Activated naive CD4-positive, alpha-beta T cell treated with anti-CD3 and anti-CD28 coated beads for 36 hours (primary cell): ENCODE measurements at regions of chr22 and their contacts with region 1.

Region 1: GRCh38 chr22:39490135-39490798 is 11.8 kb upstream of the MIEF1 start:
- DNase-seq: peak; percentile 85
- H3K4me3 Mint-ChIP-seq: no peak overlapping the region
- H3K27ac Mint-ChIP-seq: no peak overlapping the region
- H3K4me1 Mint-ChIP-seq: peaks cover 5% of the 10 kb centered on the region
- H3K27me3 Mint-ChIP-seq: no peaks in the 10 kb centered on the region

Region 2: DNA sequence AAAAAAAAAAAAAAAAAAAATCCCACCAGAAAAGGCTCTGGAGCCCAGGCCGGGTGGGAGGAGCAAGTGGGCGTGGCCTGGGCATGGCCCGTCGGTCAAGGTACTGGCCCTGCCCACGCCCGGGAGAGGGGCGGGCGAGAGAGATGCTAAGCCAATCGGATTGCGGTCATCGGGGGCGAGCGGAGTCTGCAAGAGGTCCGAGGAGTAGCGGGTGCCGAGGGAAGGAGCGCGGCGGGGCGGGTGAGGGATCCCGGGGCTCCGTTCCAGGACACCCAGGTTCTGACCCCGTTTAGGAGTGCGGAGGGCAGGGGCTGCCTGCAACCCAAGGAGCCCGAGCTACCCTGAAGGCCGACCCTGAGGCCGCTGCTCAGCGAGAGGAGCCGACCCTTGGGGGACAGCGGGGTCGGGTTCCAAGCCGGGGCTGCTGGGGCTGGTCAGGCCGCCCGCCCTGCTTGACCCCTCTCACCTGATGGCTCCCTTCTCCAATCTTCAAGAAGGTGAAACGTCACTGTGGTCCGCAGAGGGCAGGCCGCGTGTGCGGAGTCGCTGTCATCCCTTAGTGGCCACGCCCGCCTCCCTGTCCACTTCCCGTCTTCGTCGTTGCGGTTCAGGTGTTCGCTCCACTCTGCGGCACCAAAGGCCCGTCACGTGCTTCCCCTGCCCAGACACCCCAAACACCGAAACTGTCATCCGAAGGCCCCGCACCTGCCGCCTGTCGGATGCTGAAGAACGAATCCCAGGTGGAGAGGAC is 101.8 kb before region 1 on chr22:
- CTCF ChIA-PET with region 1: no interaction called
- intact Hi-C with region 1: no loop called
- DNase-seq: peak; percentile 92
- H3K4me3 Mint-ChIP-seq: peak overlapping the region; percentile 75
- H3K27ac Mint-ChIP-seq: peak overlapping the region; percentile 63
- H3K4me1 Mint-ChIP-seq: peaks cover 15% of the 10 kb centered on the region
- H3K27me3 Mint-ChIP-seq: no peaks in the 10 kb centered on the region

Region 3: GRCh38 chr22:39414886-39415285 is 75.4 kb before region 1 on chr22:
- CTCF ChIA-PET with region 1: no interaction called
- intact Hi-C with region 1: loop called (anchors 5 kb)
- DNase-seq: no peak
- H3K4me3 Mint-ChIP-seq: no peak overlapping the region
- H3K27ac Mint-ChIP-seq: no peak overlapping the region
- H3K4me1 Mint-ChIP-seq: peaks cover 64% of the 10 kb centered on the region
- H3K27me3 Mint-ChIP-seq: no peaks in the 10 kb centered on the region

Region 4: GRCh38 chr22:39514373-39514973 is 24.2 kb after region 1 on chr22:
- CTCF ChIA-PET with region 1: interaction called, 28 read pairs
- intact Hi-C with region 1: no loop called
- DNase-seq: peak; percentile 76
- H3K4me3 Mint-ChIP-seq: no peak overlapping the region
- H3K27ac Mint-ChIP-seq: peak overlapping the region; percentile 16
- H3K4me1 Mint-ChIP-seq: peaks cover 46% of the 10 kb centered on the region
- H3K27me3 Mint-ChIP-seq: no peaks in the 10 kb centered on the region